ENCODE measurements at regions of chr9 and their contacts with region 1.

Region 1: GRCh38 chr9:83937911-83938323 is 16.7 kb upstream of the KIF27 start:
- DNase-seq: peak; percentile 87
- H3K4me3 Mint-ChIP-seq: no peak overlapping the region
- H3K27ac Mint-ChIP-seq: no peak overlapping the region
- H3K4me1 Mint-ChIP-seq: peaks cover 10% of the 10 kb centered on the region
- H3K27me3 Mint-ChIP-seq: no peaks in the 10 kb centered on the region

Region 2: GRCh38 chr9:84170521-84171141 is 232.7 kb after region 1 on chr9:
- intact Hi-C with region 1: loop called (anchors 1 kb)
- DNase-seq: no peak
- H3K4me3 Mint-ChIP-seq: no peak overlapping the region
- H3K27ac Mint-ChIP-seq: no peak overlapping the region
- H3K4me1 Mint-ChIP-seq: peaks cover 6% of the 10 kb centered on the region
- H3K27me3 Mint-ChIP-seq: peaks cover 6% of the 10 kb centered on the region

Region 3: DNA sequence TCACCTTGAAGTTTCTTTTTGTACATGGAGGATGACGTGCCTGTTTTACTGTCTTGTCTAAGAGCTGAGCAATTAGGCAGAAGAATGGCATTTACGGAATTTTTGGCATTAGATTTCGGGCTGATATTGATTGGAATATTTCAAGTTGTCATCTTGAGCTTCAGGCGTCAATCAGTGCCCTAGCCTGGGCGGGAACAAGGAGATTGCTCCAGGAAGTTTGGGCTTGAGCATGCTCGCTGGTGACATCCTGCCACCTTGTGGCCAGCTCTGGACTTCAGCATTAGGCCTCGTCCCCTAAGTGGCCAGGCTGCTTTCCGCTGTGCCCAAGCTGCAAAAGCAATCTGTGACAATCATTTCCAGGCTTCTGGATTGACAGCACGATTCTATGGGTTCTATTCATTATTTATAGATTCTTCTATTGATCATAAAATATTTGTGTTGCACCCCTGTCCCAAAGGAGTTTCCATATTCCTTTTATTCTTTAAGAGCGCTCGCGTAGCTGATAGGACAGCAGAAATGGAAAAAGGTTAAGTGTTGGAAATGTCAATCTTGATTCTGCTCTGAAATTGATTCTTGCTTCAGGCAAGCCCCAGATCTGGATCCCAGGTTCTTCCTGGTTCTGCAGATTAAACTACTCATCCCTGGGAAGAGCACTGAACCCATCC is 323.3 kb after region 1 on chr9:
- intact Hi-C with region 1: loop called (anchors 1 kb)
- DNase-seq: peak; percentile 86
- H3K4me3 Mint-ChIP-seq: peak overlapping the region; percentile 44
- H3K27ac Mint-ChIP-seq: no peak overlapping the region
- H3K4me1 Mint-ChIP-seq: peaks cover 9% of the 10 kb centered on the region
- H3K27me3 Mint-ChIP-seq: peaks cover 14% of the 10 kb centered on the region